ENCODE measurements at regions of chr2 and their contacts with region 1.

Region 1: DNA sequence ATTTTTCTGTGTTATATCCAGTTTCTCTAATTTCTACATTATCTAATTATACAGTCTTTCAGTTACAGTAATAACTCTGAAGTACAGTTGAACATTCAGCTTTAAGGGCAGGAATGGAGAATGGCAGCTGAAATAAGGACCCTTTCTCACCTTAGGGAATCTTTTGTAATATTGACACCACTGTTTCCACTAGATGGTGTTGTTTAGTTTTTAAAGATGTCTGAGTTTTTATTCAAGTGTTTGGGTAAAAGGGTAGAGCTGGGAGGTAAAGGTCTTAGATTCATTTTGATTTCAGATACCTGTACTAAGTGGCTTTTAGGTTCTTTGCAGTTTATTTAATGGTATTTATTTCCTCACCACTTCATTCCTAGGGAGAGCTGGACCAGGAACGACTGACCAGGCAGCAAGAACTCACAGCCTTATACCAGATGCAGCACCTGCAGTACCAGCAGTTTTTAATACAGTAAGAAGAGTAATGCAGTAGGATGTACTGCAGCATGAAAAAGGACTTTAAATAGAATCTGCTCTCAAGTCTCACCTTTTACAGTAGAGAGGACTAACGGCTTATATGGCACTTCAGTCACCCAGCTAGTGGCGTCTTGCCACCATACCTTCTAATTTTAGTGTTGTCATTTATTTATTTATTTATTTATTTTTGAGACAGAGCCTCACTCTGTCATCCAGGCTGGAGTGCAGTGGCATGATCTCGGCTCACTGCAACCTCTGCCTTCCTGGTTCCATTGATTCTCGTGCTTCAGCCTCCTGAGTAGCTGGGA is 33.2 kb upstream of the KCNJ13 start:
- DNase-seq: no peak
- H3K4me3 Mint-ChIP-seq: no peak overlapping the region
- H3K27ac Mint-ChIP-seq: no peak overlapping the region
- H3K4me1 Mint-ChIP-seq: no peaks in the 10 kb centered on the region
- H3K27me3 Mint-ChIP-seq: no peaks in the 10 kb centered on the region
- CTCF ChIP-seq: no peak

Region 2: GRCh38 chr2:232744963-232745362 is 64.6 kb before region 1 on chr2:
- CTCF ChIA-PET with region 1: no interaction called
- intact Hi-C with region 1: no loop called
- DNase-seq: peak; percentile 6
- H3K4me3 Mint-ChIP-seq: no peak overlapping the region
- H3K27ac Mint-ChIP-seq: no peak overlapping the region
- H3K4me1 Mint-ChIP-seq: peaks cover 11% of the 10 kb centered on the region
- H3K27me3 Mint-ChIP-seq: no peaks in the 10 kb centered on the region
- CTCF ChIP-seq: no peak

Region 3: DNA sequence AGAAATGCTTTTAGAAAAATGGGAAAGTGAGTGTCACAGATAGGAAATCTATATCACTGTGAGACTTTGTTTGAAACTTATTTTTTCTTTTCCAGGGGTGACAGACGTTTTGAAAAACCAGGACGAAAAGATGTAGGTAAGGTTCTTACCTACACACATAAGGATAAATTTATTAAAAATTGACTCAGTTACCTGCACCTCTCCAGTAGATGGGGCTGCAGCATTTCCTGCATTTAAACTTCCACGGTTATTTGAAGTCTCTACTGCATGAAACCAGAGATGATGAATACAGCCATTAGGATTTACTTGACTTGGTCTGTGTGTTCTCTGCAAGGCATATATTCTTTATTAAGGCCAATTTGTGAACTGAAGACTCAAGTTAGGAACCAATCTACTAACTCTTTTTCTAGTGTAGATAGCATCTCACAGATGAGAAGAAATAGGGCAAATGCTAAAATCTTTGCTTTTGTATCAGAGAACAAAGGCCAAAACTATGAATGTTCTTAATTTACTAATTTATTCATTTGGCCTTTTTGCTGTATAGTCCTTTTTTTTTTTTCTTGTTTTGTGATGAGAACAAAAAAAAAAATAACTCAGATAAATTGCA is 48.1 kb before region 1 on chr2:
- CTCF ChIA-PET with region 1: no interaction called
- intact Hi-C with region 1: loop called (anchors 5 kb)
- DNase-seq: peak; percentile 57
- H3K4me3 Mint-ChIP-seq: no peak overlapping the region
- H3K27ac Mint-ChIP-seq: no peak overlapping the region
- H3K4me1 Mint-ChIP-seq: no peaks in the 10 kb centered on the region
- H3K27me3 Mint-ChIP-seq: no peaks in the 10 kb centered on the region
- CTCF ChIP-seq: peak; percentile 69

Measured in Calu3 (cell line).